ENCODE measurements at regions of chr11 and their contacts with region 1.

Region 1: GRCh38 chr11:69700278-69701140 is 3.3 kb downstream of the FGF19 start:
- DNase-seq: no peak
- H3K4me3 Mint-ChIP-seq: no peak overlapping the region
- H3K27ac Mint-ChIP-seq: no peak overlapping the region
- H3K4me1 Mint-ChIP-seq: no peaks in the 10 kb centered on the region
- H3K27me3 Mint-ChIP-seq: peaks cover 47% of the 10 kb centered on the region

Region 2: GRCh38 chr11:69524282-69524911 is 176.1 kb before region 1 on chr11:
- intact Hi-C with region 1: no loop called
- DNase-seq: no peak
- H3K4me3 Mint-ChIP-seq: no peak overlapping the region
- H3K27ac Mint-ChIP-seq: no peak overlapping the region
- H3K4me1 Mint-ChIP-seq: no peaks in the 10 kb centered on the region
- H3K27me3 Mint-ChIP-seq: peaks cover 3% of the 10 kb centered on the region

Region 3: GRCh38 chr11:69775163-69775755 is 74.8 kb after region 1 on chr11 and contains the start of gene FGF4:
- intact Hi-C with region 1: loop called (anchors 2 kb)
- DNase-seq: no peak
- H3K4me3 Mint-ChIP-seq: no peak within 1 kb of the TSS
- H3K27ac Mint-ChIP-seq: no peak within 1 kb of the TSS
- H3K4me1 Mint-ChIP-seq: no peaks in the 10 kb centered on the region
- H3K27me3 Mint-ChIP-seq: peaks cover 48% of the 10 kb centered on the region
- total RNA-seq, gene FGF4: not detected in 2 replicates

Region 4: GRCh38 chr11:69817265-69818230 is 117.0 kb after region 1 on chr11:
- intact Hi-C with region 1: loop called (anchors 5 kb)
- DNase-seq: peak; percentile 57
- H3K4me3 Mint-ChIP-seq: no peak overlapping the region
- H3K27ac Mint-ChIP-seq: no peak overlapping the region
- H3K4me1 Mint-ChIP-seq: peaks cover 2% of the 10 kb centered on the region
- H3K27me3 Mint-ChIP-seq: peaks cover 33% of the 10 kb centered on the region

Measured in activated CD4-positive, alpha-beta T cell treated with anti-CD3 and anti-CD28 coated beads, Interleukin-2, amount 10 ng/mL, durations not matched to agents 24 days and 14 days (primary cell).